ENCODE measurements at regions of chr6 and their contacts with region 1.

Region 1: GRCh38 chr6:167898673-167899311 is 72.1 kb downstream of the AFDN start:
- DNase-seq: no peak
- H3K4me3 ChIP-seq: no peak overlapping the region
- H3K27ac ChIP-seq: no peak overlapping the region
- H3K4me1 ChIP-seq: no peaks in the 10 kb centered on the region
- H3K27me3 ChIP-seq: no peaks in the 10 kb centered on the region
- CTCF ChIP-seq: peak; percentile 66

Region 2: DNA sequence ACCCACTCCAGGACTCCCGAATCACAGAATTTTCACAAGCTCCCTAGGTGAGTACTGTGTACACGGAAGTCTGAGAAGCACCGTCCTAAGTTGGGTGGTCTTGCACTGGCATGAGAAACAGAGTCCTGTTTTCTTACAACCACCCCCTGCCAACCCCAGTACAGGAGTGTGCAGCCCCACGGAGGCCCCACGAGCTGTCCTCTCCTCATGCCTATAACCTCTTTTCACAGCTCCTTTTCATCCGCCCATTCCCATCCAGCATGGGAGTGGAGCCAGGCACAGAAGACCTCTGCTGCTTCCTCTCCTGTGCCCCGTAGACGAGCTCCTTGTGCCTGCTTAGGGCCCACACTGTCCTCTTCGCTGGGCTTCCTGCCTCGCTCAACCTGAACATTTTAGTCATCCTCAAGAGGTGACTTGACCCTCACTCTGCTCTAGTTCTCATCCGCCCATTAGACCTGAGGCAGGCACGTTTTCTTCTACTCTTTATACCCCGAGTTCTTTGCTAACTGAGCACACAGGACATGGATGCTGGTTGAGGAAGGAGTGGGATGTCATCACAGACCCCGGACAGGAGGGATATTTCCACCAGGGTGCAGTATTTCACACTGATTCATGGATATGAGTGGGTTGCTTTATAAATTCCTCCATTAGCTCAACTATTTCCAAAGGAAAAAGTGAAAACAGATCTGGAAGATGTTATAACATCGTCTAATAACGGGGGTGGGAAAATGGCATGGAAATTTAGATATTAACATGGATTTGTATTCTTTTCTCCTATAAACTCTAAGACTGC is 413.4 kb before region 1 on chr6:
- intact Hi-C with region 1: loop called (anchors 5 kb)
- DNase-seq: no peak
- H3K4me3 ChIP-seq: no peak overlapping the region
- H3K27ac ChIP-seq: no peak overlapping the region
- H3K4me1 ChIP-seq: no peaks in the 10 kb centered on the region
- H3K27me3 ChIP-seq: no peaks in the 10 kb centered on the region
- CTCF ChIP-seq: peak; percentile 14

Region 3: GRCh38 chr6:167501781-167502385 is 396.9 kb before region 1 on chr6:
- intact Hi-C with region 1: loop called (anchors 5 kb)
- DNase-seq: peak; percentile 55
- H3K4me3 ChIP-seq: no peak overlapping the region
- H3K27ac ChIP-seq: no peak overlapping the region
- H3K4me1 ChIP-seq: no peaks in the 10 kb centered on the region
- H3K27me3 ChIP-seq: no peaks in the 10 kb centered on the region
- CTCF ChIP-seq: peak; percentile 49

Region 4: DNA sequence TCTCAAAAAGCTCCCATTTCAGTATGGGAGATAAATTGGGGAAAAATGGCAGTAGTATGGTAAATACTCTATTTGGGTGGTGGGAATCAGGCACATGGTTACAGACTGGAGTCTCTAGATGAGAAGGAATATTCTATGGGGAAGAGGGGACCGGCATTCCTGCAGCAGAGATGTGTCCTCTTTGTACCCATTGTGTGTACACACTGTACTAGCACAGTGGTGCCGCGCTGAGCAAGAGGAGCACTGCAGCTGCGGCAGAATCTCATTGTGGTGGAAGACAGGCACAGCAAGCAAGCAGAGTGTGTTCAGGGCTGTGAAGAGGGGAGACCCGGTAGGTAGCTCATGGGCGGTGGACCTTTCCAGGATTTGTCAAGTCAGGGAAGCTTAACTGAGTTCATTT is 59.0 kb before region 1 on chr6:
- intact Hi-C with region 1: no loop called
- DNase-seq: no peak
- H3K4me3 ChIP-seq: no peak overlapping the region
- H3K27ac ChIP-seq: no peak overlapping the region
- H3K4me1 ChIP-seq: no peaks in the 10 kb centered on the region
- H3K27me3 ChIP-seq: no peaks in the 10 kb centered on the region
- CTCF ChIP-seq: no peak

Region 5: GRCh38 chr6:167945937-167946485 is 47.2 kb after region 1 on chr6:
- intact Hi-C with region 1: no loop called
- DNase-seq: no peak
- H3K4me3 ChIP-seq: no peak overlapping the region
- H3K27ac ChIP-seq: no peak overlapping the region
- H3K4me1 ChIP-seq: no peaks in the 10 kb centered on the region
- H3K27me3 ChIP-seq: no peaks in the 10 kb centered on the region
- CTCF ChIP-seq: no peak